Activated naive CD4-positive, alpha-beta T cell treated with anti-CD3 and anti-CD28 coated beads for 36 hours (primary cell): ENCODE measurements at regions of chr10 and their contacts with region 1.

Region 1: GRCh38 chr10:117174439-117175214 is 22.7 kb upstream of the KCNK18 start:
- DNase-seq: peak; percentile 95
- H3K4me3 Mint-ChIP-seq: peak overlapping the region; percentile 78
- H3K27ac Mint-ChIP-seq: peak overlapping the region; percentile 16
- H3K4me1 Mint-ChIP-seq: peaks cover 15% of the 10 kb centered on the region
- H3K27me3 Mint-ChIP-seq: peaks cover 25% of the 10 kb centered on the region

Region 2: DNA sequence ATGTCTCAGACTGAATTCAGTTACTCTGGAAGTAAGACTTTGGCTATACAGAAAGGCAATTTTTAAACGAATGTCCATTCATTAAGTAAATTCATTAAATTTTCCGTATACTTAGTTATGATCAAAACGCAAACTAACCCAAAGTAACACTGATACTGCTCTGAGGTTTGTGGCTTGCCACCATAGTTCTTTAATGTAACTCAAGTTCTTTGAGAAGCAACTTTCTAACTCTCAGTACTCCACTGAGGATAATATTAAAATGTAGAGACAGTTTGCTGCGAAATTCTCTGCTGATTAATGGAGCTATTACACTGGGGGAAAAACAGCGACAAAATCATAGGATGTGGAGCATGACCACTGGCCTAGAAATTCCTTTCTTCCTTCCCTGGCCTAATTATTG is 792.3 kb before region 1 on chr10:
- CTCF ChIA-PET with region 1: no interaction called
- intact Hi-C with region 1: no loop called
- DNase-seq: no peak
- H3K4me3 Mint-ChIP-seq: no peak overlapping the region
- H3K27ac Mint-ChIP-seq: no peak overlapping the region
- H3K4me1 Mint-ChIP-seq: no peaks in the 10 kb centered on the region
- H3K27me3 Mint-ChIP-seq: no peaks in the 10 kb centered on the region

Region 3: DNA sequence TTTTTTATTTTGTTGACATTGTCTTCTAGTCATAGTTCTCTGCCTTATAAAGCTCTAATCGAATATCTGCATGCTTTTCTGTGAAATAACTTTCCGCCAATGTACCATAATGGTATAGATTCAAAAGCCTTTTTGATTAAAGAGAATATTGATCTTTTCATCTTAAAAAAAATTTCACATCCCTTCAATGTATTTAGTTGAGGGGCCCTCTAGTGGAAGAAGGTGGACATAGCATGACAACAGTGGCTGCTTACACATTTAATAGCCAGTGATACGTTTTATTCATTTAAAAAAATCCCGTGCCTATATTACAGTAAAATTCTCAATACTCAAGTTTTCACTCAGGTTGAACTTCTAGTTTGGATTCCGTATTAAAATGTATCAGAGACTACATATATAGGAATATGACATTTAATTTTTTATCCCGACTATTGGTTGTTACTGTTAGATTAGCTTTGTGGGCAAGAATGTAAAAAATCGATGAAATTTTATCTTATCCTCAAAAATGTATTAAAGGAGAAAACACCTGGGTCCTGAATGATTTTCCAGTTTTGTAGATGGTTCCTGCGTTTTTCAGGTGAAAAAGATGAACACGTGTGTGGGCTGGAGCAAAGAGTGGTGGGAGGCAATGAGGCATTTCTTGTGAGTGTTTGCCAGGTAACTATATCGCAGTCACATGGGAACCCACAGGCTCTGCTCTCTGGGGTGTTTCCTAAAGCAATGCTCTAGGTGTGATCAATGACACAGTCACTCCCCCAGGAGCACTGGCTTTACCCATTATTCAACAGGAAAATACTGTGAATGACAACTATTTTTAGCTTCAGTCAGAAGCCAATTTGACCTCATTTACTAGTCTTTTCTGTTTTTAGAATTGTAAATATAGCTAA is 653.0 kb before region 1 on chr10:
- CTCF ChIA-PET with region 1: no interaction called
- intact Hi-C with region 1: loop called (anchors 1 kb)
- DNase-seq: peak; percentile 45
- H3K4me3 Mint-ChIP-seq: no peak overlapping the region
- H3K27ac Mint-ChIP-seq: no peak overlapping the region
- H3K4me1 Mint-ChIP-seq: no peaks in the 10 kb centered on the region
- H3K27me3 Mint-ChIP-seq: peaks cover 11% of the 10 kb centered on the region

Region 4: GRCh38 chr10:116796910-116797513 is 377.6 kb before region 1 on chr10:
- CTCF ChIA-PET with region 1: interaction called, 98 read pairs
- intact Hi-C with region 1: loop called (anchors 1 kb)
- DNase-seq: peak; percentile 83
- H3K4me3 Mint-ChIP-seq: no peak overlapping the region
- H3K27ac Mint-ChIP-seq: no peak overlapping the region
- H3K4me1 Mint-ChIP-seq: peaks cover 5% of the 10 kb centered on the region
- H3K27me3 Mint-ChIP-seq: peaks cover 24% of the 10 kb centered on the region

Region 5: DNA sequence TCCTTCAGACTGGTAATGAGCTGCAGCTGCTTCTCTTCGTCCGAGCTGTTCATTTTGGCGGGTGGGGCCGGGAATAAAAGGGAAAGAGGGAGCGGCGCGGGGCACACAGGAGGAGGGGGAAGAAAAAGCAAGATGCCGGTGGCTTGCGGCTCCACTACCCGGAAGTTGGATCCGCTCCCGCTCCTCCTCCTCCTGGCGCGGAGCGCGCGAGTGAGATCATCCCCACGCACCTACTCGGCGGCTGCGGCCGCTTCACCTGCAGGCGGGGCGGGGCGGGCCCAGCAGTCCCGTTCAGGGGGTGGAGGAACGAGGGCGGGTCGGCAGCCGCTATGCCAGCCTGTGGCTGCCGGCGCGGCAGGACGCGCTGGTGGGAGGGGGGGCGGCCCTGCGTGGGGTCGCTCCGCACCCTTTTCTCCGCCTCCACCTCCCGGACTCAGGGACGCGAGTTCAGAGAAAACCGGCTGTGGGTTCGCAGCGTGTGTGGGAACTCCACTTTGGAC is 169.6 kb before region 1 on chr10 and contains the start of gene SHTN1:
- CTCF ChIA-PET with region 1: interaction called, 11 read pairs
- intact Hi-C with region 1: loop called (anchors 5 kb)
- DNase-seq: peak; percentile 55
- H3K4me3 Mint-ChIP-seq: peak within 1 kb of the TSS; percentile 66
- H3K27ac Mint-ChIP-seq: no peak within 1 kb of the TSS
- H3K4me1 Mint-ChIP-seq: peaks cover 2% of the 10 kb centered on the region
- H3K27me3 Mint-ChIP-seq: peaks cover 46% of the 10 kb centered on the region
- total RNA-seq, gene SHTN1: 0.29 to 0.40 TPM

Region 6: GRCh38 chr10:117441812-117442443 is 267.3 kb after region 1 on chr10:
- CTCF ChIA-PET with region 1: no interaction called
- intact Hi-C with region 1: no loop called
- DNase-seq: no peak
- H3K4me3 Mint-ChIP-seq: no peak overlapping the region
- H3K27ac Mint-ChIP-seq: no peak overlapping the region
- H3K4me1 Mint-ChIP-seq: no peaks in the 10 kb centered on the region
- H3K27me3 Mint-ChIP-seq: peaks cover 19% of the 10 kb centered on the region